ENCODE measurements at regions of chr11 and their contacts with region 1.

Region 1: GRCh38 chr11:8717876-8718753 is 35.5 kb downstream of the RPL27A start:
- DNase-seq: peak; percentile 78
- H3K4me3 ChIP-seq: no peak overlapping the region
- H3K27ac ChIP-seq: peak overlapping the region; percentile 85
- H3K4me1 ChIP-seq: peaks cover 62% of the 10 kb centered on the region
- H3K27me3 ChIP-seq: no peaks in the 10 kb centered on the region
- CTCF ChIP-seq: no peak
- POLR2A ChIP-seq: no peak

Region 2: DNA sequence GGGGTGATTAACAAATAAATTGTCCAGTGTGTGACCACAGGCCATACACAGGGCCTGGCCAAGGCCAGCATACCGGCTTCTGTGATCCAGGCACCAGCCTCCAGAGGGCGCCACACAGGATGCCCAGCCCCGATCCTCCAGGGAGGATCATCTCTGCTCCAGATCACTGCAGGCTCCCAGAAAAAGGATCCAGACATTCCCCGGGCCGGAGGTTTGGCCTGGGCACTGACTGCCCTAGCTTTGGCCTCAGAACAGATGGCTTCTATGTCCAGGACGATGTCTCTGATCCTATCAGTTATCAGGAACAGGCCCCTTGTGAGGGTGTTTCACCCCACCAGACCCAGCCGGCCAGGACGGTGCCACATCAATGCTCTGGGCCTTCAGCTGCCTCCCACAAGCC is 380.0 kb before region 1 on chr11:
- CTCF ChIA-PET with region 1: no interaction called
- POLR2A ChIA-PET with region 1: no interaction called
- dilution Hi-C with region 1: no loop called
- intact Hi-C with region 1: no loop called
- DNase-seq: peak; percentile 29
- H3K4me3 ChIP-seq: no peak overlapping the region
- H3K27ac ChIP-seq: no peak overlapping the region
- H3K4me1 ChIP-seq: no peaks in the 10 kb centered on the region
- H3K27me3 ChIP-seq: no peaks in the 10 kb centered on the region
- CTCF ChIP-seq: peak; percentile 69 to 85
- POLR2A ChIP-seq: no peak

Region 3: DNA sequence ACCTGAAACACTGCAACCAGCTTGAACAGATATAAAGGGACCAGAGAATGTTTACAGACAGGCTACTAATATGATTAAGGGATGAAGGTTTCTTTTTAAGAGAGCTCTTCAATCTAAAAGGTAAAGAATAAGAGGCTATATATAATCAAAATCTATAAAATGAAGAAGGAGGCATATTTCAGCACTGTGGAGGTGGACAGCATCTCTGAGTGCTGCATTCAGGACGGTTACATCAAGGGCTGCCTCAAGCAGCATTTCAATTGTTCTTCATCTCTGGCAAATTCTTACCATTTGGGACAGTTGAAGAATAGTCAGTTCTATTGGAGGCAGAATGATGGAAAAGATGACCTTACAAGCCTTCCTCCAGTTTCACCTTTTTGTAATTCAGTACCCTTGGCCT is 314.8 kb before region 1 on chr11:
- CTCF ChIA-PET with region 1: no interaction called
- POLR2A ChIA-PET with region 1: no interaction called
- dilution Hi-C with region 1: no loop called
- intact Hi-C with region 1: no loop called
- DNase-seq: peak; percentile 17
- H3K4me3 ChIP-seq: no peak overlapping the region
- H3K27ac ChIP-seq: no peak overlapping the region
- H3K4me1 ChIP-seq: no peaks in the 10 kb centered on the region
- H3K27me3 ChIP-seq: no peaks in the 10 kb centered on the region
- CTCF ChIP-seq: no peak
- POLR2A ChIP-seq: no peak

Region 4: DNA sequence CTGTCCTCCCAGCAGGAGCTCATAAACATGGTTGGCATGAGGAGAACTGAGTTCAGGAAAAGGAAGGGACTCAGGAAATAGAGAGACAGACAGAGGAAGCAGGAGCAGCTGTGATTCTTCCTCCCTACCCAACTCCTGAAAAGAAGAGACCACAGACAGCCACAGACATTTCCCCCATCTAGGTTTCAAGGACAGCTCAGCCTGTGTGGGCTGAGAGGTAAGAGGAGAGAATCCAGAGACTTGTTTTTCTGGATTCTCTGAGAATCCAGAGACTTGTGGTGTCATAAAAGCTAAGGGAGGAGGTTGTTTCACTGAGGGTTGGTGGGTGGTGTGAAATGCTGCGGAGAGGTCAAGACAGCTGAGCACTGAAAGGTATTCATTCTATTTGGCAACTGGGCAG is 105.1 kb before region 1 on chr11:
- CTCF ChIA-PET with region 1: no interaction called
- POLR2A ChIA-PET with region 1: no interaction called
- dilution Hi-C with region 1: no loop called
- intact Hi-C with region 1: no loop called
- DNase-seq: peak; percentile 23
- H3K4me3 ChIP-seq: no peak overlapping the region
- H3K27ac ChIP-seq: no peak overlapping the region
- H3K4me1 ChIP-seq: peaks cover 12% of the 10 kb centered on the region
- H3K27me3 ChIP-seq: no peaks in the 10 kb centered on the region
- CTCF ChIP-seq: no peak
- POLR2A ChIP-seq: no peak

Region 5: DNA sequence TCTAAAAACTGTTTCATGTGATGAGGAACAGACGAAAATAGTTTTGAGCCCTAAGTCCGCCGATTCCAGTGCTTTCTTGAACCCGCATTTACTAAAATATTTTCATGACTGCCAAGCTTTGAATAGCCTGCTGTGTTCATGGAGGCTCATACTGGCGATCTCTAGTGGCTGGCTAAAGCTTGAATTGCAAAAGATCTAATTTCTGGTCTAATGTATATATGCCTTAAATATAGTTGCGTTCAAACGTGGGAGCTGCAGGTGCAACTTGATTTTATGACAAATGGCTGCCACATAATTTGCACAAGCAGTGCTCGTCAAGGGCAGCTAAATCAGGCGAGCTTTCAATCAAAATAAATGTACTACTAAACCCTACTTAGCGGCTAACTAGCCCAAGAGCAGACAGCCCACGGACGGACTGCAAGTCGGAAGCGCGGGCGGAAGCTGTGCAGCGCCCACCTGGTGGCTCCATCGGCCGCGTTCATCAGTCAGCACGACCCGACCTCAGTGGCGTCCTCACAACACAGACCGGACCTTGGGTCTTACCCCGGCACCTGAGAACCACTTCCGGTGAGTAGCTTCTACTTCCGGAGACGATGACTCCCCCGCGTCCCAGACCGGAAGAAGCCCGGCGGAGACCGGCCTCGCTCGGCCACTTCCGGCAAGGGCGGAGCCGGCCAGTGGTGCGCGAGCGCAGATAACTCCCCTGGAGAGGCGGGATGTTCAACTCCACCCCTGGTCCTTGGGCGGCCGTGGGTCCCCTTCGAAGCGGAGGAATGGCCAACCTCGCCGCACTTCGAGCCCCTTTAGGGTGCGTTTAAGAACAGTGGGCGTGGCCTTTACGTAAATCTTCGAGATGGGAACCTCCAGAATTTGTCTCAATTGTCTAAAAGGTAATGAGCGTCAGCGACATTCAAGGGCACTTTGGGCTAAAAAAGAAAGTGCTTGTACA is 29.4 kb before region 1 on chr11:
- CTCF ChIA-PET with region 1: interaction called, 8 read pairs
- POLR2A ChIA-PET with region 1: no interaction called
- dilution Hi-C with region 1: no loop called
- intact Hi-C with region 1: loop called (anchors 1 kb)
- DNase-seq: peak; percentile 93
- H3K4me3 ChIP-seq: peak overlapping the region; percentile 45 to 86 (median 53)
- H3K27ac ChIP-seq: peak overlapping the region; percentile 65
- H3K4me1 ChIP-seq: peaks cover 46% of the 10 kb centered on the region
- H3K27me3 ChIP-seq: no peaks in the 10 kb centered on the region
- CTCF ChIP-seq: no peak
- POLR2A ChIP-seq: peak; percentile 99

Region 6: DNA sequence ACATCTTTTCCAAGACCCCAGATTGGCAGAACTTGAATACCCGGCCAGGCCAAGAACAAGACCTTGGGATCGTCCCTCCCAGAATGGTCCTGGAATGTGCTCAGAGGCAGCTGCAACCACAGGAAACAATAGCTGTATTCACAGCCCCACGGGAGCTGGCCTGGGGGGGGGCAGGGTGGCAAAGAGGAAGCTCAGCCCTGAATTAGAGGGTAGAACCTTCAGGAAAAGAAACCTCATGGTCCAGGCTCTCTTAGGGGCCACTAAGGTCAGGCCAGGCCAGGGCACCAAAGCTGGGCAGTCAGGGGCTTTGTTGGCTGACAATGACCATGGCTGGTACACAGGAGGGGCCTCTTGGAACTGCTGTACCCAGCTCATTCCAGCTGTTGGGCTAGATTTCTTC is 18.2 kb before region 1 on chr11:
- CTCF ChIA-PET with region 1: interaction called, 7 read pairs
- POLR2A ChIA-PET with region 1: no interaction called
- dilution Hi-C with region 1: no loop called
- intact Hi-C with region 1: loop called (anchors 2 kb)
- DNase-seq: peak; percentile 34
- H3K4me3 ChIP-seq: no peak overlapping the region
- H3K27ac ChIP-seq: peak overlapping the region; percentile 19
- H3K4me1 ChIP-seq: peaks cover 11% of the 10 kb centered on the region
- H3K27me3 ChIP-seq: no peaks in the 10 kb centered on the region
- CTCF ChIP-seq: no peak
- POLR2A ChIP-seq: no peak

Region 7: GRCh38 chr11:8732748-8733241 is 14.7 kb after region 1 on chr11:
- CTCF ChIA-PET with region 1: interaction called, 3 read pairs
- POLR2A ChIA-PET with region 1: no interaction called
- dilution Hi-C with region 1: no loop called
- intact Hi-C with region 1: loop called (anchors 1 kb)
- DNase-seq: peak; percentile 84
- H3K4me3 ChIP-seq: no peak overlapping the region
- H3K27ac ChIP-seq: peak overlapping the region; percentile 14
- H3K4me1 ChIP-seq: peaks cover 19% of the 10 kb centered on the region
- H3K27me3 ChIP-seq: no peaks in the 10 kb centered on the region
- CTCF ChIP-seq: no peak
- POLR2A ChIP-seq: no peak